HepG2 (cell line): ENCODE measurements at regions of chr19 and their contacts with region 1.

Region 1: DNA sequence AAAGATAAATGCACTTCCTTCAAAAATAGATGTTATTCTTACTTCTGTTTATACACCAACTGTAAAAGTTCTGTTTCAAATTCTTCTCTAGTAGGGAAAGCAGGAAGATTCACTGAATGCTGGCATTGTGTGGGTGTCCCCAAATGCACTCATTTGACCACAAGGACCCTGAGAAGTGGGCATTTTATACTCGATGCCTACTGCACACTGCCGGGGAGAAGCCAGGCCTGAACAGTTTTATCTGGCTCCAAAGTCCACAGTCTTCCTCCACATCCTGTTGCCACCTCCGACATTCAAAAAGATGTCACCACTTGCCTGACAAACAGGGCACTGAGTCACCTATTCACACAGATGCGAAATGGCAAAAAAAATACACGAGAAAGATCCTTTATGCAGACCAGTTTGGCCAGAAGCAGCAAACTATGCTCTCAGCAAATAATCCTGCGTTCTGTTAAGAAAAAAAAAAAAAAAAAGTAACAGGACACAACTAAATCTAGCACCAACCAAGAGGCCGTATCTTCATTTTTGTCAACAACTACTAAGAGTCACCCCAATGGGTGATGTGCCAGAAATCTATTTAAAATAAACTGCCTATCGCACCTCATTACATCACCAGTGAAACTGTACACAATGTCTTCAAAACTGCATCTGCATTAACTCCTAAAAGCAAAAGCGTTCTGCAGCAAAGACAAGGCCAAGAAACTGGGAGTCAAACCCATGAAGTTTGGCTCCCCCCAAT is 6.2 kb downstream of the ZC3H4 start:
- DNase-seq: peak; percentile 93
- ATAC-seq: peak; percentile 81
- H3K4me3 ChIP-seq: peak overlapping the region in 2 of 3 experiments; percentile 5 to 18; a peak in 2 of 6 replicates
- H3K27ac ChIP-seq: peak overlapping the region; percentile 100
- H3K4me1 ChIP-seq: peaks cover 78% of the 10 kb centered on the region
- H3K27me3 ChIP-seq: no peaks in the 10 kb centered on the region; a peak in 1 of 5 replicates
- CTCF ChIP-seq: no peak
- EP300 ChIP-seq: peak in 1 of 2 experiments; percentile 71; a peak in 1 of 4 replicates
- POLR2A ChIP-seq: peak; percentile 26 to 39; a peak in 3 of 4 replicates
- RAD21 ChIP-seq: 0 out of 2 replicates have a peak, but pooled peaks have one; percentile 10

Region 2: DNA sequence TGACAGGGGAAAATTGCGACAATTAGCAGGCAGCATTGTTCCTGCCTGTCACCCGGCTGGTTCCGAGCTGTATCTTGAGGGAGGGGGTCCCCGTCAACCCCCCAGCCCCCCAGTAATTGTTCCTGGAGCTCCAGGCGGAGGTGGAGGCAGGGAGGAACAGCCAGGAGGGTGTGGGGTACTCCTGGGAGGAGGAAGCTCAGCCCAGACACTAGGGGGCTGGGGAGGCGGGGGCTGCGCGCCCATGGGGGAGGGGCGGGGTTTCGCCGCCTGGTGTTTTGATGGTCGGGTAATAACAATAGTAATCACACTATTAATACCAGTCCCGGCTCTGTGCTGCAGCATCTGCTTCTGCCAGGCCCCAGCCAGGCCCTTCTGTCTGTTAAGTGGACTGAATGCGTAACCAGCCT is 79.2 kb before region 1 on chr19:
- CTCF ChIA-PET with region 1: no interaction called
- POLR2A ChIA-PET with region 1: no interaction called
- in situ Hi-C with region 1: no loop called
- intact Hi-C with region 1: no loop called
- DNase-seq: no peak
- ATAC-seq: no peak
- H3K4me3 ChIP-seq: no peak overlapping the region
- H3K27ac ChIP-seq: no peak overlapping the region
- H3K4me1 ChIP-seq: peaks cover 7% of the 10 kb centered on the region; the same call in 1 of the 2 replicates
- H3K27me3 ChIP-seq: no peaks in the 10 kb centered on the region
- CTCF ChIP-seq: no peak
- EP300 ChIP-seq: no peak
- POLR2A ChIP-seq: no peak
- RAD21 ChIP-seq: no peak

Region 3: DNA sequence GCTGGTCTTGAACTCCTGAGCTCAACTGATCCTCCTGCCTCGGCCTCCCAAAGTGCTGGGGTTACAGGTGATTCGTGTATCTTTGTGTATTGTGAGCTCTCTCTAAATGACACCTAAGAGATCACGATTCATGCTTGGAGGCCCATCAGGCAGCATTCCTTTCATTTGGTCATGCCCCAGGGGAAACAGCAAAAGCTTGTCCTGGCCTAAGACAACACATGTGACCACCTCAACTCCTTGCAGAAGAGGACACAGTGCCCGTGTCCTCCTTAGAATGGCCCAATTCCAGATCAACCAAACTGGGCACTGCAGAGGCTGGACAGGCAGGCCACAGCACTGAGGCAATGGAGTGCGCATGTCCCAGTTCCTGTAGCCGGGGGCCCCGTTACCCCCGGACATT is 26.3 kb before region 1 on chr19:
- CTCF ChIA-PET with region 1: interaction called, 4 read pairs
- POLR2A ChIA-PET with region 1: interaction called, 48 read pairs
- in situ Hi-C with region 1: no loop called
- intact Hi-C with region 1: loop called (anchors 1 kb)
- DNase-seq: no peak
- ATAC-seq: no peak
- H3K4me3 ChIP-seq: no peak overlapping the region
- H3K27ac ChIP-seq: no peak overlapping the region
- H3K4me1 ChIP-seq: peaks cover 7% of the 10 kb centered on the region
- H3K27me3 ChIP-seq: no peaks in the 10 kb centered on the region
- CTCF ChIP-seq: no peak
- EP300 ChIP-seq: no peak
- POLR2A ChIP-seq: no peak
- RAD21 ChIP-seq: no peak

Region 4: GRCh38 chr19:47143322-47144073 is 36.1 kb after region 1 on chr19:
- CTCF ChIA-PET with region 1: no interaction called
- POLR2A ChIA-PET with region 1: no interaction called
- in situ Hi-C with region 1: no loop called
- intact Hi-C with region 1: no loop called
- DNase-seq: no peak
- ATAC-seq: no peak
- H3K4me3 ChIP-seq: no peak overlapping the region
- H3K27ac ChIP-seq: no peak overlapping the region
- H3K4me1 ChIP-seq: no peaks in the 10 kb centered on the region
- H3K27me3 ChIP-seq: no peaks in the 10 kb centered on the region
- CTCF ChIP-seq: no peak
- EP300 ChIP-seq: no peak
- POLR2A ChIP-seq: no peak
- RAD21 ChIP-seq: no peak